ENCODE measurements at regions of chrX and their contacts with region 1.

Region 1: DNA sequence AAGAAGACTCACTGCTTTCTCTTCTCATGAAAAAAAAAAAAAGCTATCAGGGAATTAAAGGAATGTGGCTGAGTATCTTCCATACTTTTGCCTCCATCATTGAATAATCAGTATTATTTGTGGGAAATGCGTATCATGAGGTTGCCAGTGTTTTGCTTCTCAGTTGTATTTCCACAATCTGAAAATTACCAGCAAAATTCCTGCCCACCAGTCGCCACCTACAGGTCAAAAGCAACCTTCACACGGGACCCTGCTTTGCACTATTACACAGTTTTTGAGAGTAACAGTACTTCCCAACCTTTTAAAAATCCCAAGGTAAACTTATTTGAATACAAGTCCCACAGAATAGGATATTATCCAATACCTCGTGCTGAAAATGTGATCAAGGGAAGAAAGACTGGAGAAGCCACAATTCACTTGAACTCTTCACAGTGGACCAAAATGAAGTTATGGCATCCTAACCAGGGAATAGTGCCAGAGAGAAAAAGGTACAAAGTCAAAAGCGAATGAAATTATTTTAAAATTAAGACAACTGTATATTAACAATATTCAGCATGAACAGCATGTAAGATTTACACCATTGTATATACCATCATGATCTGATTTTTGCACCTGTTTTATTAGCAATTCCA is 30.4 kb downstream of the PGRMC1 start:
- DNase-seq: peak; percentile 21
- H3K4me3 ChIP-seq: no peak overlapping the region
- H3K27ac ChIP-seq: no peak overlapping the region
- H3K4me1 ChIP-seq: no peaks in the 10 kb centered on the region
- CTCF ChIP-seq: peak; percentile 85

Region 2: DNA sequence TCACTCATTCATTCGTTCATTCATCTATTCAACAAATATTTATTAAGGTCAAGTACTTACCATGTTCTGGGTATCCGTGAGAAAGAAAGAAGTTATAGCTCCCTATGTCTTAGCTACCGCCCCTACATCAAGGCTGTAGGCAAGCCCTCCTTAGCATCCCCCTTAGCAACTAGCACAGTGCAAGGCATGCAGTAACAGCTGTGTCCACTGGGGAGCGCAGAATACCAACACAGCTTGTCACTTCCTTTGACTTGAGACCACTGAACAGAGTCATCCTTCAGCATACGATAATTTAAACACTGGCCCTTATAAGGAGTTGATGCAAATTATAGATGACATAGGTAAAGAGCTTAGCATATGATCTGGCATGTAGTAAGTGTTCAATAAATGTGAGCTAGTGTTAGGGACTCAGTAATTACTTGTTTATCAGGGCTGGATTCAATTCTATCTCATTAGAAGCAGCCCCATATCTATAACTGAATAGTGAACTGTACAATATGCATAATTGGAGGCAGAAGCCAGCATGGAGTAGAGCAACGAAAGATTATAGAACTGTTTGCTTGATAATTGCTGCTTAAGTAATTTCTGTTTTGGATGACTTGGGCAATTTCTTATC is 147.6 kb before region 1 on chrX:
- CTCF ChIA-PET with region 1: no interaction called
- POLR2A ChIA-PET with region 1: no interaction called
- intact Hi-C with region 1: loop called (anchors 2 kb)
- DNase-seq: peak; percentile 47
- H3K4me3 ChIP-seq: no peak overlapping the region
- H3K27ac ChIP-seq: no peak overlapping the region
- H3K4me1 ChIP-seq: no peaks in the 10 kb centered on the region
- CTCF ChIP-seq: peak; percentile 77